H1 (cell line): ENCODE measurements at regions of chr17 and their contacts with region 1.

Region 1: GRCh38 chr17:5249615-5250014 is 15.0 kb upstream of the SCIMP start:
- DNase-seq: peak; percentile 25 to 66
- H3K4me3 ChIP-seq: no peak overlapping the region
- H3K27ac ChIP-seq: no peak overlapping the region
- H3K4me1 ChIP-seq: no peaks in the 10 kb centered on the region; a peak in 1 of 7 replicates
- H3K27me3 ChIP-seq: no peaks in the 10 kb centered on the region
- CTCF ChIP-seq: peak in 2 of 3 experiments; percentile 70 to 73; a peak in 3 of 4 replicates
- EP300 ChIP-seq: no peak
- POLR2A ChIP-seq: no peak
- RAD21 ChIP-seq: peak; percentile 76 to 82

Region 2: GRCh38 chr17:5291683-5292350 is 42.2 kb after region 1 on chr17:
- CTCF ChIA-PET with region 1: no interaction called
- POLR2A ChIA-PET with region 1: no interaction called
- DNase-seq: no peak
- H3K4me3 ChIP-seq: no peak overlapping the region
- H3K27ac ChIP-seq: no peak overlapping the region
- H3K4me1 ChIP-seq: peaks cover under 1 to 6% (median 4%) of the 10 kb centered on the region in 4 experiments; a peak in 4 of 7 replicates
- H3K27me3 ChIP-seq: no peaks in the 10 kb centered on the region
- CTCF ChIP-seq: no peak
- EP300 ChIP-seq: no peak
- POLR2A ChIP-seq: no peak
- RAD21 ChIP-seq: no peak

Region 3: GRCh38 chr17:5304636-5305035 is 55.0 kb after region 1 on chr17:
- CTCF ChIA-PET with region 1: interaction called, 33 read pairs
- POLR2A ChIA-PET with region 1: no interaction called
- DNase-seq: no peak
- H3K4me3 ChIP-seq: no peak overlapping the region
- H3K27ac ChIP-seq: no peak overlapping the region
- H3K4me1 ChIP-seq: no peaks in the 10 kb centered on the region
- H3K27me3 ChIP-seq: no peaks in the 10 kb centered on the region
- CTCF ChIP-seq: no peak
- EP300 ChIP-seq: no peak
- POLR2A ChIP-seq: no peak
- RAD21 ChIP-seq: no peak